ENCODE measurements at regions of chrX and their contacts with region 1.

Region 1: GRCh38 chrX:68079961-68080360 is 353.3 kb downstream of the OPHN1 start:
- DNase-seq: no peak
- ATAC-seq: no peak
- H3K4me3 Mint-ChIP-seq: no peak overlapping the region
- H3K27ac Mint-ChIP-seq: no peak overlapping the region
- H3K4me1 Mint-ChIP-seq: no peaks in the 10 kb centered on the region
- H3K27me3 Mint-ChIP-seq: no peaks in the 10 kb centered on the region
- CTCF ChIP-seq: no peak

Region 2: DNA sequence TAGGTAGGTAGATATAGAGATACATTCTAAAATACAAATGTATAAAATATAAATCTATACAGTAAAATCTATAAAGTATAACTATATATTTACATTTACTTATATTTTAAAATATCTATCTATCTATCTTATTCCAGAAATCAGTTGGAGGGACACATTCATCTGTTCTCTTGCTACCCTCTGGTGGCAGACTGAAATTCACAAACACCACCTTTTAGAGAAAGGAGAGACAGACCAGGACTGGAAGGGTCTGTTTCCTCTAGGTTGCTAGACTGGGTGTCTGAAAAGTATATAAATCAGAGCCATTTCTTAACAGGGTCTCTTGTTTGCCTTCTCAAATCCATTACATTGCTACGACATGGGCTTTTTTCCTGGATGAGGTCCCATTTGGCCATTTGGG is 10.3 kb after region 1 on chrX:
- CTCF ChIA-PET with region 1: no interaction called
- POLR2A ChIA-PET with region 1: no interaction called
- intact Hi-C with region 1: loop called (anchors 2 kb)
- DNase-seq: no peak
- ATAC-seq: no peak
- H3K4me3 Mint-ChIP-seq: no peak overlapping the region
- H3K27ac Mint-ChIP-seq: no peak overlapping the region
- H3K4me1 Mint-ChIP-seq: no peaks in the 10 kb centered on the region
- H3K27me3 Mint-ChIP-seq: no peaks in the 10 kb centered on the region
- CTCF ChIP-seq: no peak

Region 3: DNA sequence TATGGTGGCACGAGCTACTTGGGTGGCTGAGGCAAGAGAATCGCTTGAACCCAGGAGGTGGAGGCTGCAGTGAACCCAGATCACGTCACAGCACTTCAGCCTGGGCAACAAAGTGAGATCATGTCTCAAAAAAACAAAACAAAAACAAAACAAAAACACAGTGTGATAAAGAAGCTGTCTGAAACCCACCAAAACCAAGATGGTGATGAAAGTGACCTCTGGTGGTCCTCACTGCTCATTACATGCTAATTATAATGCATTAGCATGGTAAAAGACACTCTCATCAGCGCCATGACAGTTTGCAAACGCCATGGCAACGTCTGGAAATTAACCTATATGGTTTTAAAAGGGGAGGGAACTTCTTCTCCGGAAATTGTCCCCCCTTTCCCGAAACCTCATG is 382.7 kb after region 1 on chrX:
- CTCF ChIA-PET with region 1: no interaction called
- POLR2A ChIA-PET with region 1: no interaction called
- intact Hi-C with region 1: no loop called
- DNase-seq: no peak
- ATAC-seq: no peak
- H3K4me3 Mint-ChIP-seq: no peak overlapping the region
- H3K27ac Mint-ChIP-seq: no peak overlapping the region
- H3K4me1 Mint-ChIP-seq: no peaks in the 10 kb centered on the region
- H3K27me3 Mint-ChIP-seq: no peaks in the 10 kb centered on the region
- CTCF ChIP-seq: no peak